Head of caudate nucleus (tissue), 42 donors: ENCODE measurements at regions of chr5 and their contacts with region 1.

Region 1: GRCh38 chr5:157471709-157472108 is 11.7 kb downstream of the NIPAL4 start:
- DNase-seq: peak in 10 of 42 donors; percentile 26 to 76 (median 46)

Region 2: GRCh38 chr5:157431544-157432200 is 40.0 kb before region 1 on chr5:
- intact Hi-C with region 1: loop called (anchors 5 kb)
- DNase-seq: peak in 22 of 42 donors; percentile 9 to 82 (median 52)